Right ventricle myocardium inferior (tissue), 1 donor: ENCODE measurements at regions of chr12 and their contacts with region 1.

Region 1: DNA sequence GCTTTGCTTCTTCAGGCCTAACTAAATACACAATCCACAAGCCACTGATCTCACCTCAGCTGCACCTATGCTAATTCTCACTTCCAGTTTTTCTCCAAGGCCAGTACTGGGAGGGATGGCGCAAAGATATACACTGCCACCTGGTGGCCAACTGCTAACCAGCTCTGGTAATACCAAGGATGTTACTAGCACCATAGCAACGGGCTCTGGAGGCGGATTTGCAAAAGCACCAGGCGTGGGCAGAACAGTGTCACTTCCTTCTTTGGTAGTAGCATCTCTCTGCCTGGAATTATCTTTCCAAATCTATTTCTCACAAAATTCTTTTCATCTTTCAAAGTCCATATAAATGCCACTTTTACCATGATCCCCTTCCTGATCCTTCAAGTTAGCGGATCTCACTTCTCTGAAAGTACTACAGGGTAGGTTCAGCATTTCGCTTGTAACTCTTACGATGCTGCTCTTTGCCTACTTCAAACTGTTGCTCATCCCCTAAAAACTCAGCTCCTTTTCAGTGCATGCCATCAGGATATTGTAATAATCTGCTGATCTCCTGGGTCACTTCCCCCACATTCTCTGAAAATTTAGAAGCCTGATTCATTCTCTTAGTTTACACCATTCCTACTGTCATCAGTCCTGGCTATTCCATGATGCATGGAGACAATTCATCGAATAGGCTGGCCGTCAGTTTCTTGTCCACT is 37.1 kb upstream of the FOXJ2 start:
- DNase-seq: peak; percentile 84
- ATAC-seq: peak; percentile 99

Region 2: DNA sequence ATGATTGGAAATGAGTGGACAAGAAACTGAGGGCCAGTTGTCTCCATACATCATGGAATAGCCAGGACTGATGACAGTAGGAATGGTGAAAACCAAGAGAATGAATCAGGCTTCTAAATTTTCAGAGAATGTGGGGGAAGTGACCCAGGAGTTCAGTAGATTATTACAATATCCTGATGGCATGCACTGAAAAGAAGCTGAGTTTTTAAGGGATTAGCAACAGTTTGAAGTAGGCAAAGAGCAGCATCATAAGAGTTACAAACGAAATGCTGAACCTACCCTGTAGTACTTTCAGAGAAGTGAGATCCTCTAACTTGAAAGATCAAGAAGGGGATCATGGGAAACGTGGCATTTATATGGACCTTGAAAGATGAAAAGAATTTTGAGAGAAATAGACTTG is 135.9 kb before region 1 on chr12:
- intact Hi-C with region 1: loop called (anchors 2 kb)
- DNase-seq: no peak
- ATAC-seq: no peak

Region 3: GRCh38 chr12:7872566-7873319 is 122.7 kb before region 1 on chr12 and contains the start of gene SLC2A14:
- intact Hi-C with region 1: no loop called
- DNase-seq: no peak
- ATAC-seq: no peak
- total RNA-seq, gene SLC2A14: not detected

Region 4: GRCh38 chr12:7948589-7949260 is 46.7 kb before region 1 on chr12:
- intact Hi-C with region 1: no loop called
- DNase-seq: no peak
- ATAC-seq: no peak

Region 5: DNA sequence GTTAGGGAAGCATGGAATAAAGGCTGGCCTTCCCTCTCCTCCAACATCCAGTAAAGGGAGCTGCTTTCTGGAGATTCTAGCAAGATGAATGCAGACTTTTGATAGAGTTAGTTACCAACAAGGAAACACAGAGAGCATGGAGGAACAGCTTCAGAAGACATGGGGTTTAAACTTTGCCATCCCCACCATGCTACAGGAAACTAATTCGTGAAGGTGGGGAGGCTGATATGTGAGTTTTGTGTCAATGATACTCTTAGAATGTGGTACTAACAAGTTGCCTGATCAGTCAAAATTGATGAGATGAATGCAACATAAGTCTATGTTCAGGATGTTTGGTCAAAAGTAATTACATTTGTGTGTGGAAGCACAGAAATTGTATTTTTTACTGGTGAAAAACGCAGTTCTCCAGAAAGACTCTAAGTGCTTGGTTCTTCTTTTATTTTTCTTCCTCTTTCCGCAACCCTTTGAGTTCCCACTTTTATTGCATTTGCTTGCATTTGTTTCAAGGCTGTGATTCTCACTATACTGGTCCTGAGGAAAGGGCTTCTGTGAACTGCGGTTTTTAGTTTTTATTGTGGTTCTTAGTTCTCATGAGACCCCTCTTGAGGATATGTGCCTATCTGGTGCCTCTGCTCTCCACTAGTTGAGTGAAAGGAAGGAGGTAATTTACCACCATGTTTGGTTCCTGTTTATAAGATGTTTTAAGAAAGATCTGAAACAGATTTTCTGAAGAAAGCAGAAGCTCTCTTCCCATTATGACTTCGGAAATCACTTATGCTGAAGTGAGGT is 127.9 kb after region 1 on chr12 and contains the start of gene CLEC4A:
- intact Hi-C with region 1: no loop called
- DNase-seq: no peak
- ATAC-seq: no peak
- total RNA-seq, gene CLEC4A: 1.2 TPM